ENCODE measurements at regions of chr20 and their contacts with region 1.

Region 1: DNA sequence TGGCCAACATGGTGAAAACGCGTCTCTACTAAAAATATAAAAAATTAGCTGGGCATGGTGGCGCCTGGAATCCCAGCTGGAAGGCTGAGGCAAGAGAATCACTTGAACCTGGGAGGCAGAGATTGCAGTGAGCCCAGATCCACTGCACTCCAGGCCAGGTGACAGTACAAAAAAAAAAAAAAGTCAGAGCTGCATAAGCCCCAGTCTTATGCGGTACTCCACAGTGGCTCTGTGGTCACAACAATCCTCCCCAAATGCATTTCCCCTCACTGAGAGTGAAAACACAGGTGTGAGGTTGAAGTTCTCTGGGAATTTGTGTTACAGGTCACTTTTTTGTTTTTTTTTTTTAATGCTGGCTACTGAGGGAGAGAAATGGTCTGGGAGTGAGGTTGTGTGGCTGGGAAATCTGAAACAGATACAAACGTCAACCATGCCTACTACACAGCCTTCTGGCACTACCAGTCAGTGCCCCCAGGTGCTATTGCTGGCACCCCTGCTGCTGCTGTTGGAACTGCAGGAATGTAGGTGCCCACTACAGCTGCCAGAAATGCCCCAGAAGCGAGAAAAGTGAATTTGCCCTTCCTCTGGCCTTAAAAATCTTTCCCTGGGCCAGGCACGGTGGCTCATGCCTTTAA is 5.7 kb downstream of the MRPS26 start:
- DNase-seq: no peak

Region 2: GRCh38 chr20:3109350-3110302 is 58.1 kb after region 1 on chr20:
- intact Hi-C with region 1: loop called (anchors 5 kb)
- DNase-seq: peak; percentile 37 to 90 (median 70)

Region 3: GRCh38 chr20:3374296-3374695 is 322.8 kb after region 1 on chr20:
- intact Hi-C with region 1: no loop called
- DNase-seq: no peak